Heart right ventricle (tissue), 16 donors: ENCODE measurements at regions of chr1 and their contacts with region 1.

Region 1: GRCh38 chr1:1435106-1435903 is at the start of gene VWA1:
- DNase-seq: peak; percentile 60 to 83
- ATAC-seq: peak; percentile 36 to 57 (median 44)
- H3K4me3 ChIP-seq: peak within 1 kb of the TSS; percentile 50 to 69 (median 64)
- H3K27ac ChIP-seq: peak within 1 kb of the TSS; percentile 79 to 98 (median 92)
- H3K4me1 ChIP-seq: peaks cover 47 to 76% (median 64%) of the 10 kb centered on the region in 9 donors
- H3K27me3 ChIP-seq: peaks cover 0 to 48% (median 9%) of the 10 kb centered on the region in 7 donors
- CTCF ChIP-seq: peak in 1 of 9 donors; percentile 6
- total RNA-seq, gene VWA1: 10.8 to 52.8 (median 14.1) TPM

Region 2: GRCh38 chr1:1399187-1399871 is 36.0 kb before region 1 on chr1 and contains the start of gene CCNL2:
- intact Hi-C with region 1: loop called in 2 of 10 experiments (anchors 5 kb)
- DNase-seq: peak; percentile 98 to 100
- ATAC-seq: peak; percentile 95 to 99 (median 98)
- H3K4me3 ChIP-seq: peak within 1 kb of the TSS; percentile 80 to 100 (median 96)
- H3K27ac ChIP-seq: peak within 1 kb of the TSS; percentile 83 to 98 (median 92)
- H3K4me1 ChIP-seq: peaks cover 13 to 68% (median 43%) of the 10 kb centered on the region in 9 donors
- H3K27me3 ChIP-seq: no peaks in the 10 kb centered on the region
- CTCF ChIP-seq: peak; percentile 18 to 77 (median 61)
- total RNA-seq, gene CCNL2: 38.5 to 77.5 (median 47.7) TPM

Region 3: DNA sequence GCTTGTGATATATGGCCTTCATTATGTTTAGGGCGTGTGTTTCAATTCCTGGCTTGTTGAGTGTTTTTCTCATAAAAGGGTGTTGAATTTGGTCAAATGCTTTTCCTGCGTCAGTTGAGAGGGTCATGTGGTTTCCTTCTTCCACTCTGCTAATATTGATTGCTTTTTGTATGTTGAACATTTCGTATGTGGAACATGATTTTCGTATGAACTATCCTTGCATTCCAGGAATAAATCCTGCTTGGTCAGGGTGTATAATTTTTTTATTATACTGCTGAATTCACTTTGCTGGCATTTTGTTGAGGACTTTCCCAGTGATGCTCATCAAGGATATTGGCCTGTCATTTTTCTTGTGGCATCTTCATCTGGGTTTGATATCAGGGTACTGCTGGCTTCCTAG is 72.0 kb after region 1 on chr1:
- intact Hi-C with region 1: loop called in 1 of 10 experiments (anchors 10 kb)
- DNase-seq: no peak
- ATAC-seq: no peak
- H3K4me3 ChIP-seq: no peak overlapping the region
- H3K27ac ChIP-seq: no peak overlapping the region
- H3K4me1 ChIP-seq: peaks cover 7 to 35% (median 17%) of the 10 kb centered on the region in 9 donors
- H3K27me3 ChIP-seq: no peaks in the 10 kb centered on the region
- CTCF ChIP-seq: no peak